AG04449 (cell line): ENCODE measurements at regions of chr10 and their contacts with region 1.

Region 1: DNA sequence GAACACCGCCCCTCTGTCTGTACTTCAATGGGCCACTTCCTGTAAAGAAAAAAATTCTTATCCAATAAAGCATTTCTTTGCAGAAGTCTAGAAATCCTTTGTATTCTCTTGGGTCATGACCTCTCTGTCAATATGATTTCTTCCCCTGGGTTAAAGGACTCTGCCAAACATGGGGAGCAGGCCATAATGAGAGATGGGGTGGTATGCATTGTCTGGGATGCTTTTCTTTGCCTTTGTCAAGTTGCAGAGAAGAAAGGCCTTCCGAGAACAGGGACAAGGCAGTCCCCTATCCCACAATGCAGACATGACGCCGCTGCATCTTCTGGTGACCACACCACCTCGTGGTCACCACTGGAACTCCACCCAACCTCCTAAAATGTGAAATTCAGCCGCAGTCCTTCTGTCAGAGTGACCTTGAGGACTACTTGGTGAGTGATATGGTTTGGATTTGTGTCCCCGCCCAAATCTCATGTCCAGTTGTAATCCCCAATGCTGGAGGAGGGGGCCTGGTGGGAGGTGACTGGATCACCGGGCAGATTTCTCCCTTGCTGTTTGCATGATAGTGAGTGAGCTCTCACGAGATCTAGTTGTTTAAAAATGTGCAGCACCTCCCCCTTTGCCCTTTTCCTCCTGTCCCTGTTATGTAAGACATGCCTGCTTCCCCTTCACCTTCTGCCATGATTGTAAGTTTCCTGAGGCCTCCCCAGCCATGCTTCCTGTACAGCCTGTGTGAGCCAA is 15.2 kb upstream of the FRMPD2 start:
- DNase-seq: no peak
- H3K4me3 ChIP-seq: no peak overlapping the region
- CTCF ChIP-seq: peak; percentile 85

Region 2: GRCh38 chr10:48300556-48300955 is 10.9 kb after region 1 on chr10:
- CTCF ChIA-PET with region 1: interaction called, 17 read pairs
- POLR2A ChIA-PET with region 1: no interaction called
- DNase-seq: no peak
- H3K4me3 ChIP-seq: no peak overlapping the region
- CTCF ChIP-seq: no peak